Transverse colon (tissue), 4 donors: ENCODE measurements at regions of chr2 and their contacts with region 1.

Region 1: DNA sequence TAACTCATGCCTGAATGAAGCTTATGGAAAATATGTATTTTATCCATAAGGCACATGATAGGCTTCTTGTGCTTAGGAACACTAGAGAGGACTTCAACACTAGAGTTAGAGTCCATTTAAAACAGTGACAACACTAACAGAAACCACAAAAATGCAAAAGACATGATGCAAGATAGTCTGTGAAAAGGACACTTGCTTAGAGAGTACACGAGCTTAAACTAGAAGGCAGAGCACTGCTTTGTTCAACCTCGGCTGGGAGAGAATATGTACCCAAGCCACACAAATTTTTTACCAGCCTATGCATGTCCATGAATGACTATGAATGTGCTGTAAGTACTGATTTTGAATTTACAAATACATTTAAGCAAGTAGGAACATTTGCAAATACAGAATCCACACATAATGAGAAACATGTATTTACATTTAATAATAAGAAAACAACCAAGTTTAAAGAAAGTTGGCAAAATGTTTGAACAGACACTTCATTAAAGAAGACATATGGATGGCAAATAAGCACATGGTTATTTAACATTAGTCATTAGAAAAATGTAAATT is 130.6 kb downstream of the SPOPL start:
- DNase-seq: no peak
- H3K4me3 ChIP-seq: no peak overlapping the region
- H3K27ac ChIP-seq: no peak overlapping the region
- H3K4me1 ChIP-seq: no peaks in the 10 kb centered on the region
- H3K27me3 ChIP-seq: no peaks in the 10 kb centered on the region
- CTCF ChIP-seq: no peak
- EP300 ChIP-seq: no peak
- POLR2A ChIP-seq: no peak

Region 2: GRCh38 chr2:138665937-138666336 is 33.8 kb after region 1 on chr2:
- in situ Hi-C with region 1: no loop called
- intact Hi-C with region 1: loop called (anchors 1 kb)
- DNase-seq: no peak
- H3K4me3 ChIP-seq: no peak overlapping the region
- H3K27ac ChIP-seq: no peak overlapping the region
- H3K4me1 ChIP-seq: no peaks in the 10 kb centered on the region
- H3K27me3 ChIP-seq: no peaks in the 10 kb centered on the region
- CTCF ChIP-seq: no peak
- EP300 ChIP-seq: no peak
- POLR2A ChIP-seq: no peak